A549 (cell line): ENCODE measurements at regions of chr5 and their contacts with region 1.

Region 1: GRCh38 chr5:60699530-60700382 is at the start of gene DEPDC1B:
- DNase-seq: peak; percentile 79 to 92
- ATAC-seq: peak; percentile 97
- H3K4me3 ChIP-seq: peak within 1 kb of the TSS; percentile 74
- H3K27ac ChIP-seq: peak within 1 kb of the TSS; percentile 87 to 93
- H3K4me1 ChIP-seq: peaks cover 38% of the 10 kb centered on the region
- CTCF ChIP-seq: peak; percentile 50
- EP300 ChIP-seq: no peak
- POLR2A ChIP-seq: peak; percentile 66
- RAD21 ChIP-seq: peak; percentile 34 to 35; a peak in 2 of 5 replicates
- polyA plus RNA-seq, gene DEPDC1B: 27.2 and 34.8 TPM in 2 replicates

Region 2: DNA sequence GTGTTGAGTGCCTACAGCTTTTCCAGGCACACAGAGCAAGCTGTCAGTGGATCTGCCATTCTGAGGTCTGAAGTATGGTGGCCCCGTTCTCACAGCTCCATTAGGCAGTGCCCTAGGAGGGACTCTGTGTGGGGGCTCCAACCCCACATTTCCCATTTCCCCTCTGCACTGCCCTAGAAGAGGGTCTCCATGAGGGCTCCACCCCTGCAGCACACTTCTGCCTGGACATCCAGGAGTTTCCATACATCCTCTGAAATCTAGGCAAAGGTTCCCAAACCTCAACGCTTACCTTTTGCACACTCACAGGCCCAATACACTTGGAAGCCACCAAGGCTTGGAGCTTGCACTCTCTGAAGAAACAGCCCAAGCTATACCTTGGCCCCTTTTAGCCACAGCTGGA is 131.1 kb before region 1 on chr5:
- CTCF ChIA-PET with region 1: no interaction called
- POLR2A ChIA-PET with region 1: no interaction called
- DNase-seq: peak in 1 of 2 experiments; percentile 9
- ATAC-seq: no peak
- H3K4me3 ChIP-seq: no peak overlapping the region
- H3K27ac ChIP-seq: no peak overlapping the region
- H3K4me1 ChIP-seq: no peaks in the 10 kb centered on the region
- CTCF ChIP-seq: no peak
- EP300 ChIP-seq: no peak
- POLR2A ChIP-seq: no peak
- RAD21 ChIP-seq: no peak

Region 3: GRCh38 chr5:60597572-60598320 is 102.0 kb before region 1 on chr5:
- CTCF ChIA-PET with region 1: no interaction called
- POLR2A ChIA-PET with region 1: no interaction called
- DNase-seq: no peak
- ATAC-seq: no peak
- H3K4me3 ChIP-seq: no peak overlapping the region
- H3K27ac ChIP-seq: no peak overlapping the region
- H3K4me1 ChIP-seq: no peaks in the 10 kb centered on the region
- CTCF ChIP-seq: no peak
- EP300 ChIP-seq: no peak
- POLR2A ChIP-seq: no peak
- RAD21 ChIP-seq: no peak

Region 4: DNA sequence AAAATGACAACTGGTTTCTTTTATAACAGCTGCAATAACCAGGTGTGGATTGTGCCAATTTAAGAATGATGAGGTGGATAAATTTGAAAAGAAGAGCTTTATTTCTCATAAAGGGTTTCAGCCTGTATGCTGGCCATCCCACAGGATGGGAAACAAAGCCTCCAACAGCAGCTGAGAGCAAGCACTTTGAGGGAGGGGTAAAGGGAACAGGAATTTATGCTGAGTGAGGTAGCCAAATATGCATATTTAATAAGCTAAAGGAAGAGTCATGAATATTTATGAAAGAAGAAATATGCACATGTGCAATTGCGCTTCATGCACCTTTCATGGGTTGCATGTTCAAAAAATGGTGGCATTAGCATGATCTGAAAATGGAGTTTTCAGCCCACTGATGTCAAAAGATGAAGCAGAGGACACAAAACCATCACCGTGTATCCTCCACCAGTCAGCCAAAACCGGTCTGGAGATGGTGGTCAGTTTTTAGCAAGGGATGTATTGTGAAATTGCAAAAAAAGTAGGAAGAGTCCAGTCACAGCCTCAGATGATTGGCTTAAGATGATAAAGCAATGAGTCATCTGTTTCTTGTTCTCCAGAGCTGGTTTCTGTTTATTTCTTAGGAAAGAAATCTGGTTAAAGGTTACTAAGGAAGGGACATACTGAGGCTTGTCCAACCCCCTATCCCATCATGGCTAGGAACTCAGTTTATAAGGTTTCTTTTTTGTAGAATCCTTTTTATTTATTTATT is 47.7 kb before region 1 on chr5:
- CTCF ChIA-PET with region 1: no interaction called
- POLR2A ChIA-PET with region 1: no interaction called
- DNase-seq: peak; percentile 12 to 44
- ATAC-seq: peak; percentile 71 to 81
- H3K4me3 ChIP-seq: no peak overlapping the region
- H3K27ac ChIP-seq: no peak overlapping the region
- H3K4me1 ChIP-seq: peaks cover 10% of the 10 kb centered on the region; the same call in 2 of the 3 replicates
- CTCF ChIP-seq: no peak
- EP300 ChIP-seq: no peak
- POLR2A ChIP-seq: no peak
- RAD21 ChIP-seq: no peak

Region 5: DNA sequence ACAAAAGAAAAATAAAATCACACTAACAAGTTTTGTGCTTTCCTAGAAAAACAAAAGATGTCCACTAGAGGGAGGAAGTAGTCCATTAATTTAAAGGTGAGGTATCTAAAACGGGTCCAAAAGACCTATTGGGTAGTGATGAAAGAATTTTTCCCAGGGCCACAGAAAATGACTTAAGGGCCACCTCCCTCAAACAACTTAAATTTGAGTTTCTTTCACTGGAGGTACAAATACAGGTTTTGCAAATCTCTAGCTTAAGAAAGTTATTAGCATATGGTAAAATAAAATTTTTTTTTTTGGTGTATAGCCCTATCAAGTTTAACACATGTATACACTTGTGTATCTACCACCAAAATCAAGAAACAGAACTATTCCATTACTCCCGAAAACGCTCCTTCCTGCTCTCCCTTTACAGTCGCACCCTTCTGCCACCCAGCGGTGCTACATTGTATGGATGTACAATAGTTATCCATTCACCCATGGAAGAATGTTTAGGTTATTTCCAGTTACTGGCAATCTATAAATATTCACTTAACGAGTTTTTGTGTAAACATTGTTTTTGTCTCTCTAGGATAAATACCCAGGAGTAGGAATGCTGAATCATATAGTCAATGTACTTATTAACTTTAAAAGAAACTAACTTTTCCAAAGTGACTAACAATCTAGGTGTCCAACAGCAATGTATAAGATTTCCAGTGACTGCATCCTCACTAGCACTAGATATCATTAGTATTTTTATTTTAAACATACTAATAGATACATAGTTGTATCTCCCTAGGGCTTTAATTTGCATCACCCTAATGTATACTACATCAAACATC is 21.7 kb before region 1 on chr5:
- CTCF ChIA-PET with region 1: interaction called, 13 read pairs
- POLR2A ChIA-PET with region 1: interaction called, 3 read pairs
- DNase-seq: peak; percentile 54 to 56
- ATAC-seq: peak; percentile 64 to 85
- H3K4me3 ChIP-seq: no peak overlapping the region
- H3K27ac ChIP-seq: peak overlapping the region in 1 of 2 experiments; percentile 14; a peak in 1 of 6 replicates
- H3K4me1 ChIP-seq: peaks cover 20% of the 10 kb centered on the region
- CTCF ChIP-seq: peak; percentile 88
- EP300 ChIP-seq: no peak
- POLR2A ChIP-seq: no peak
- RAD21 ChIP-seq: peak; percentile 81 to 88

Region 6: DNA sequence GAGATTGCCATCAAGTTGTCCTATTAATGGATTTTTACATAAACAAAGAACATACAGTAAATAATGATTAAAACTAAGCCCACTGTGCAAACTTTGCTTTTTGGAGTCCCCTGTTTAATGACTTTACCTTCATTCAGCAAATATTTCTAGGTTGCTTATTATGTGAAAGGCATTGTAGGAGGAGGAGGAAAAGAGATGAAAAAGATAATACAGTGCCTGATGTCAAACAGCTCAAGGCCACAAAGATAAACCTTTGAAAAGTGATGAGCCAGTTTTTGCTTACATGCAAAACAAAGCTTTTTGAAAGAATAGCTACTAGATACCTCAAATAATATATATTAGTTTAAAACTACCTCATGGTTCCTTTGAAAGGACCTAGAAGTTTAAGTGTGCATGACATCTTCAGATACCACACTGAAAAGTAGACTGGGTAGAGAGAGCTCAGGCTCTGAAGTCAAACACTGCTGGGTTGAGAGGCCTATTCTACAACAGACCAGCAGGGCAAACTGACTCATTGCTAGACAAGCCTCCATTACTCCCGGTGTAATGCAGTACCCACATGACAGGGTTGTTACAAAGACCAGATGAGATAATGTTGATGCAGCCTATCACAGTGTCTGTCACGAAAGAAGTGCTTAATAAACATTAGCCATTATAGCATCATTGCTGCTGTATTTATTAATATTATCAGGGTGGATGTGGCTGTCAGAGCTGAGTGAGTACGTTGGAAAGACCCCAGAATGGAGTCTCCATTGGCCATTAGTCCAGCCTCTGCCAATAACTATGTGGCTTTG is 11.6 kb before region 1 on chr5:
- CTCF ChIA-PET with region 1: interaction called, 64 read pairs
- POLR2A ChIA-PET with region 1: interaction called, 11 read pairs
- DNase-seq: peak; percentile 50 to 75
- ATAC-seq: peak; percentile 99 to 100
- H3K4me3 ChIP-seq: no peak overlapping the region
- H3K27ac ChIP-seq: no peak overlapping the region
- H3K4me1 ChIP-seq: peaks cover 4% of the 10 kb centered on the region; the same call in 1 of the 3 replicates
- CTCF ChIP-seq: 0 out of 3 replicates have a peak, but pooled peaks have one; percentile 16
- EP300 ChIP-seq: no peak
- POLR2A ChIP-seq: no peak
- RAD21 ChIP-seq: peak in 1 of 2 experiments; percentile 12; a peak in 1 of 5 replicates

Region 7: GRCh38 chr5:60710373-60710772 is 10.6 kb after region 1 on chr5:
- CTCF ChIA-PET with region 1: interaction called, 10 read pairs
- POLR2A ChIA-PET with region 1: interaction called, 3 read pairs
- DNase-seq: no peak
- ATAC-seq: no peak
- H3K4me3 ChIP-seq: no peak overlapping the region
- H3K27ac ChIP-seq: no peak overlapping the region
- H3K4me1 ChIP-seq: no peaks in the 10 kb centered on the region
- CTCF ChIP-seq: no peak
- EP300 ChIP-seq: no peak
- POLR2A ChIP-seq: no peak
- RAD21 ChIP-seq: peak in 1 of 2 experiments; percentile 18; a peak in 1 of 5 replicates

Region 8: GRCh38 chr5:60718166-60718892 is 18.6 kb after region 1 on chr5:
- CTCF ChIA-PET with region 1: interaction called, 10 read pairs
- POLR2A ChIA-PET with region 1: no interaction called
- DNase-seq: no peak
- ATAC-seq: no peak
- H3K4me3 ChIP-seq: no peak overlapping the region
- H3K27ac ChIP-seq: no peak overlapping the region
- H3K4me1 ChIP-seq: no peaks in the 10 kb centered on the region
- CTCF ChIP-seq: no peak
- EP300 ChIP-seq: no peak
- POLR2A ChIP-seq: no peak
- RAD21 ChIP-seq: no peak

Region 9: GRCh38 chr5:61020415-61020814 is 320.7 kb after region 1 on chr5:
- CTCF ChIA-PET with region 1: no interaction called
- POLR2A ChIA-PET with region 1: no interaction called
- DNase-seq: peak in 1 of 2 experiments; percentile 48
- ATAC-seq: no peak
- H3K4me3 ChIP-seq: no peak overlapping the region
- H3K27ac ChIP-seq: peak overlapping the region in 1 of 2 experiments; percentile 58; a peak in 2 of 6 replicates
- H3K4me1 ChIP-seq: peaks cover 24% of the 10 kb centered on the region; the same call in 2 of the 3 replicates
- CTCF ChIP-seq: no peak
- EP300 ChIP-seq: no peak
- POLR2A ChIP-seq: no peak
- RAD21 ChIP-seq: no peak